ENCODE measurements at regions of chr3 and their contacts with region 1.

Region 1: DNA sequence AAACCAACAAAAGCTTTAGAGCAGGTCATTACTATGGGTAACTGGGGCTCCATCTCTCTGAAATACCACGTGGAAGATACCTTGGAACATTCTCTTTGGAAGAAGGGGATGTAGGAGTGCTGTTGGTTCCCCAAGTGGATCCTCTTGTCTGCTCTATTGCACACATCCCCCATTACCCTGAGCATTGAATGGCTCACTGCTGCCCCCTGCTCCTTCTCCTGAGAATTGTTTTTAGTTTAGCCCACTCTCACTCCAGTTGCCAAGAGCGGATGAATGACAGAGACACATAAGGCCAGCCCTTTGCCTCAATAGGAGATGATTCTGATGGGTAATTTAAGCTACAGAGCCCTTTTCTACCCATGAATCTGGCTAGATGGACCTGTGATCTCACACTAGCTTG is 135.6 kb upstream of the SUCLG2 start:
- DNase-seq: peak; percentile 68
- H3K4me3 ChIP-seq: no peak overlapping the region
- H3K27ac ChIP-seq: no peak overlapping the region
- H3K4me1 ChIP-seq: no peaks in the 10 kb centered on the region
- H3K27me3 ChIP-seq: peaks cover 0 to 2% of the 10 kb centered on the region in 2 experiments
- CTCF ChIP-seq: peak; percentile 62 to 67
- POLR2A ChIP-seq: no peak

Region 2: DNA sequence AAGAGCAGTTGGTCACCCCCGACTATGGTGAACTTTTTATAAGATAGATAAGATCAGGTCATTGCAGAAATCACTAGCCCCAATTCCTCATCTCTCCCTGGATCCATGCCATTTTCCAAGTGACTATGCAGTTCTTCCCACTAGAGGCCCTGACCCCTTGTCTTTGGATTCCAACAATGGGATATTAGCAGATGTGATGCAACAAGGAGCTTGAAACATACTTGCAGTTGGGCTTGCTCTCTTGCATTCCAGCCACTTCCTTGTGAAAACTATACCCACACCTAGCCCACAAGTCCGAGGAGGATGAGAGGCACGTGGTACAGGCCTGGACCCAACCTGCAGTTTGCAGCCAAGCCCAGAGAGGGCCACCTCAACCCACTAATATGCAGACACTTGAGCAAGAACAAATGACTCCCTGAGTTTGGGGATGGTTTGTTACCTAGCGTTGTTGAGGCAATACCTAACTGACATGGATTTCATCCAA is 196.2 kb before region 1 on chr3:
- CTCF ChIA-PET with region 1: interaction called, 4 read pairs
- POLR2A ChIA-PET with region 1: no interaction called
- dilution Hi-C with region 1: no loop called
- intact Hi-C with region 1: loop called (anchors 1 kb)
- DNase-seq: no peak
- H3K4me3 ChIP-seq: no peak overlapping the region
- H3K27ac ChIP-seq: no peak overlapping the region
- H3K4me1 ChIP-seq: no peaks in the 10 kb centered on the region
- H3K27me3 ChIP-seq: no peaks in the 10 kb centered on the region
- CTCF ChIP-seq: no peak
- POLR2A ChIP-seq: no peak

Region 3: DNA sequence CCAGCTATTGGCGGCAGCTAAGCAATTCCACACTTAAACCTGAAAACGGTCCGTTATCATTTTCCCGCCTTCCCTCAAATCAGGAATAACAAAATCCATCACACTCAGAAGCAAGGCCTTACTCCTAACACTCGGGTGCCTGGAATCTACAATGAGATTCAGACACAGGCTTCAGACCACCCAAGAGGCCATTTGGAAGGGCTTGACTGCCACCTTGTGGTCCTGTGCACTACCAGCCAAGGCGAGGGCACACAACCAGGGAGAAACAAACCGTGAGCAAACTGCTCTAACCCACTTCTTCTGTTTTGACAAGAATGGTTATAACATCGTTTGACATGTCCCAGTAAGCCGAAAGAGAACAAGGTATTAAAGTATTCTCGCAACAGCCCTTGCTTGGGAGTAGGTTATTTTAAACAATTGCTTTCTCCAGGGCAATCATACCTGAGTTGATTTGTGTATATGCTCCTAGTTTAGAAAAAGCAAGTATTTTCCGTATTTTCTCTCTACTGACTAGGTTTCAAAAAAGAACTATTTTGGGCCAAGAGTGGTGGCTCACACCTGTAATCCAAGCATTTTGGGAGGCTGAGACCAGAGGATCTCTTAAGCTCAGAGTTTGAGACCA is 1182.4 kb after region 1 on chr3:
- CTCF ChIA-PET with region 1: no interaction called
- POLR2A ChIA-PET with region 1: no interaction called
- dilution Hi-C with region 1: no loop called
- intact Hi-C with region 1: loop called (anchors 1 kb)
- DNase-seq: peak; percentile 65
- H3K4me3 ChIP-seq: no peak overlapping the region
- H3K27ac ChIP-seq: no peak overlapping the region
- H3K4me1 ChIP-seq: peaks cover 12% of the 10 kb centered on the region
- H3K27me3 ChIP-seq: peaks cover 10 to 21% of the 10 kb centered on the region in 2 experiments
- CTCF ChIP-seq: peak; percentile 89 to 90
- POLR2A ChIP-seq: no peak